CD4-positive, alpha-beta memory T cell (primary cell): ENCODE measurements at regions of chr16 and their contacts with region 1.

Region 1: GRCh38 chr16:67806428-67807147 is at the starts of genes RANBP10 and TSNAXIP1:
- DNase-seq: peak; percentile 97 to 99 (median 99)
- H3K4me3 ChIP-seq: peak within 1 kb of the TSS; percentile 91 to 93
- H3K4me3 Mint-ChIP-seq: peak within 1 kb of the TSS; percentile 88 to 95 (median 90)
- H3K27ac ChIP-seq: peak within 1 kb of the TSS; percentile 95
- H3K27ac Mint-ChIP-seq: peak within 1 kb of the TSS; percentile 85 to 98 (median 95)
- H3K4me1 ChIP-seq: peaks cover 43% of the 10 kb centered on the region
- H3K4me1 Mint-ChIP-seq: peaks cover 26 to 52% (median 36%) of the 10 kb centered on the region in 4 donors
- H3K27me3 ChIP-seq: no peaks in the 10 kb centered on the region
- H3K27me3 Mint-ChIP-seq: no peaks in the 10 kb centered on the region
- total RNA-seq, gene RANBP10: 25.6 to 27.8 TPM
- total RNA-seq, gene TSNAXIP1: 0.44 to 0.64 TPM

Region 2: GRCh38 chr16:67719048-67719777 is 87.4 kb before region 1 on chr16 and contains the start of gene GFOD2:
- CTCF ChIA-PET with region 1: interaction called, 4 read pairs
- POLR2A ChIA-PET with region 1: interaction called, 15 read pairs
- intact Hi-C with region 1: loop called (anchors 1 kb)
- DNase-seq: peak; percentile 95 to 99 (median 96)
- H3K4me3 ChIP-seq: peak within 1 kb of the TSS; percentile 69 to 81
- H3K4me3 Mint-ChIP-seq: peak within 1 kb of the TSS; percentile 94 to 99 (median 97)
- H3K27ac ChIP-seq: peak within 1 kb of the TSS; percentile 83
- H3K27ac Mint-ChIP-seq: peak within 1 kb of the TSS; percentile 89 to 100 (median 98)
- H3K4me1 ChIP-seq: peaks cover 27% of the 10 kb centered on the region
- H3K4me1 Mint-ChIP-seq: peaks cover 29 to 50% (median 40%) of the 10 kb centered on the region in 4 donors
- H3K27me3 ChIP-seq: no peaks in the 10 kb centered on the region
- H3K27me3 Mint-ChIP-seq: no peaks in the 10 kb centered on the region
- total RNA-seq, gene GFOD2: 18.0 to 19.8 TPM

Region 3: DNA sequence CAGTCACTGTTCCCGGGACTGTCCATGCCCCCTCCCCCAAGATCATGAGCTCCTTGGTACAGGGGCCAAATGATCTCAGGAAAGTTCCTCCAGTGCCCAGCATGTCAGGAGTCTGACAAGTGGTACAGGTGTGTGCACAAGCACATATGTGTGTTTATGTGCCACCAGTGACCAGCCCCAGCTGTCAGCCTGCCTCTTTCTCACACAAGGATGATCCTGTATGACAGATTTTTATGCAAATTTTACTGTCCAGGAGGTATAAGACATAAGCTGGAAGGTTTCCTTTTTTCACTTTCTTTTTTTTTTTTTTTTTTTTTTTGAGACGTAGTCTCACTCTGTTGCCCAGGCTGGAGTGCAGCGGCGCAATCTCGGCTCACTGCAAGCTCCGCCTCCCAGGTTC is 56.1 kb before region 1 on chr16:
- CTCF ChIA-PET with region 1: no interaction called
- POLR2A ChIA-PET with region 1: no interaction called
- intact Hi-C with region 1: no loop called
- DNase-seq: no peak
- H3K4me3 ChIP-seq: no peak overlapping the region
- H3K4me3 Mint-ChIP-seq: no peak overlapping the region
- H3K27ac ChIP-seq: no peak overlapping the region
- H3K27ac Mint-ChIP-seq: peak overlapping the region in 4 of 7 donors; percentile 31 to 86 (median 82)
- H3K4me1 ChIP-seq: no peaks in the 10 kb centered on the region
- H3K4me1 Mint-ChIP-seq: peaks cover 0 to 3% (median 1%) of the 10 kb centered on the region in 4 donors
- H3K27me3 ChIP-seq: no peaks in the 10 kb centered on the region
- H3K27me3 Mint-ChIP-seq: no peaks in the 10 kb centered on the region

Region 4: GRCh38 chr16:67833418-67834241 is 27.0 kb after region 1 on chr16:
- CTCF ChIA-PET with region 1: interaction called, 3 read pairs
- POLR2A ChIA-PET with region 1: interaction called, 18 read pairs
- intact Hi-C with region 1: loop called (anchors 1 kb)
- DNase-seq: peak; percentile 90 to 94 (median 91)
- H3K4me3 ChIP-seq: peak overlapping the region; percentile 53 to 74
- H3K4me3 Mint-ChIP-seq: peak overlapping the region; percentile 87 to 95 (median 91)
- H3K27ac ChIP-seq: peak overlapping the region; percentile 60
- H3K27ac Mint-ChIP-seq: peak overlapping the region; percentile 80 to 91 (median 85)
- H3K4me1 ChIP-seq: peaks cover 16% of the 10 kb centered on the region
- H3K4me1 Mint-ChIP-seq: peaks cover 10 to 21% (median 15%) of the 10 kb centered on the region in 4 donors
- H3K27me3 ChIP-seq: no peaks in the 10 kb centered on the region
- H3K27me3 Mint-ChIP-seq: no peaks in the 10 kb centered on the region

Region 5: DNA sequence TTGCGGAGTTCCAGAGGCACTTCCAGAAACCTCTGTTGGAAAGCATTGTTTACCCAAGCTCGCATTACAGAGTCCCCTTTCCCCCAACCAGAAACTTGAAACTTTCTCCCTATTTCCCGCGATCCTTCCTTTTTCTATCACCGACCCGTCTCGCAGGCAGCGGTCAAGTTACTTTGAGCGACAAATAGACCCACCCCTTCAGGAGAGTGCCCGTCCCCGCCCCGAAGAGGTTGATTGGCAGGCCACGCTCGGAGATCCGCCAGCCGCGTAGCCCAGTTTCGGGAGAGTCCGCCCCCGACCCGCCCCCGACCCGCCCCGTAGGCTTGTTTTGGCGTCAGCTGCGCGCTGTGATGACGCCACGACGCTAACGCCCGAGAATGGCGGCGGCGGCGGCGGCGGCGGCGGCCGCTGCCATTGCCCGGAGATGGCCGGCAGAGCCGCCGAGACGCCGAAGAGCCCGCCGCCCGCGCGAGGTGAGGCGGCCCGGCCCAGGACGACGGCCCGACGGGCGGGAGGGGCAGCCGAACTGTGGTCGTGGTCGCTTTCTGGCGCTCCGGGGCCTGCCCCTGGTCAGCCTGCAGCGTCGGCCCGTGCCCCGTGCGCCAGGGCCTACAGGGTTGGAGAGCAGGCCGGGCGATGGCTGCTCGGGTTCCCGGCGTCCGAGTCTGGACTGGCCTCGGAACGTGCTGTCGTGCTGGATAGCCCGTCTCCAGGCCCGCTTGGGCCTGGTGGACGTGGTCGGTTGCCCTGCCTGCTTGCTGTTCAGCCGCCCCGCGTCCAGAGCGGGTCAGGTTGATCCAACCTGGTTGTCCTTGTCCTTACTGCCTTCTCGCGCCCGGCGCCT is 86.5 kb after region 1 on chr16 and contains the start of gene PSKH1:
- CTCF ChIA-PET with region 1: no interaction called
- POLR2A ChIA-PET with region 1: no interaction called
- intact Hi-C with region 1: loop called (anchors 1 kb)
- DNase-seq: peak; percentile 86 to 95 (median 87)
- H3K4me3 ChIP-seq: peak within 1 kb of the TSS; percentile 76 to 90
- H3K4me3 Mint-ChIP-seq: peak within 1 kb of the TSS; percentile 89 to 98 (median 96)
- H3K27ac ChIP-seq: peak within 1 kb of the TSS; percentile 95
- H3K27ac Mint-ChIP-seq: peak within 1 kb of the TSS; percentile 96 to 98 (median 97)
- H3K4me1 ChIP-seq: peaks cover 20% of the 10 kb centered on the region
- H3K4me1 Mint-ChIP-seq: peaks cover 12 to 48% (median 39%) of the 10 kb centered on the region in 4 donors
- H3K27me3 ChIP-seq: no peaks in the 10 kb centered on the region
- H3K27me3 Mint-ChIP-seq: no peaks in the 10 kb centered on the region
- total RNA-seq, gene PSKH1: 22.3 to 25.1 TPM